Activated CD4-positive, alpha-beta T cell treated with anti-CD3 and anti-CD28 coated beads, Interleukin-2, amount 10 ng/mL, durations not matched to agents 7 days and 5 days (primary cell): ENCODE measurements at regions of chr1 and their contacts with region 1.

Region 1: DNA sequence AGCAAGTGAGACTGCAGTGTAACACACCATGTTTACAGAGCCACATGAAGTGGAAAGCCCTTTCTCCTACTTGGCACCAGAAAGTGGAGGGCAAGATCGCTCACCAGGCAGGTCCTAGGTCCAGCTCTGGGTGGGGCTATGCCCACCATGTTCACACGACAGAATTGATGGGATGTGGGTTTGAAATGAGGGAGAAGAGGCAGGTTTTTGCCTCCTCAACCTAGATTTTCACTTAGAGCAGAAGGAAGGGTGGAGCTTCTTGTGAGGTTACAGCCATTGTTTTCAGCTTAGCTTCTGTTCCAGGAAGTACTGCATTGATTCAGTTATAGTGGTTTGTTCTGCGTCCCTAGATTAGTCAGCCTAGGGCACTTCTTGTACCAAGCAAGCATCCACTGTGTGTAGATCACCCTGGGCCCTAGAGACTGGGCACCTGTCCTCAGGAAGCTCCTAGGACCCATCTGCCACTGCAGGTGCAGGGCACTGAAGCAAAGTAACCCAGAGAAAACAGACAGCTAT is 2.3 kb downstream of the CD53 start:
- DNase-seq: peak; percentile 71
- H3K4me3 Mint-ChIP-seq: peak overlapping the region; percentile 94
- H3K27ac Mint-ChIP-seq: peak overlapping the region; percentile 98
- H3K4me1 Mint-ChIP-seq: peaks cover 57% of the 10 kb centered on the region
- H3K27me3 Mint-ChIP-seq: no peaks in the 10 kb centered on the region

Region 2: DNA sequence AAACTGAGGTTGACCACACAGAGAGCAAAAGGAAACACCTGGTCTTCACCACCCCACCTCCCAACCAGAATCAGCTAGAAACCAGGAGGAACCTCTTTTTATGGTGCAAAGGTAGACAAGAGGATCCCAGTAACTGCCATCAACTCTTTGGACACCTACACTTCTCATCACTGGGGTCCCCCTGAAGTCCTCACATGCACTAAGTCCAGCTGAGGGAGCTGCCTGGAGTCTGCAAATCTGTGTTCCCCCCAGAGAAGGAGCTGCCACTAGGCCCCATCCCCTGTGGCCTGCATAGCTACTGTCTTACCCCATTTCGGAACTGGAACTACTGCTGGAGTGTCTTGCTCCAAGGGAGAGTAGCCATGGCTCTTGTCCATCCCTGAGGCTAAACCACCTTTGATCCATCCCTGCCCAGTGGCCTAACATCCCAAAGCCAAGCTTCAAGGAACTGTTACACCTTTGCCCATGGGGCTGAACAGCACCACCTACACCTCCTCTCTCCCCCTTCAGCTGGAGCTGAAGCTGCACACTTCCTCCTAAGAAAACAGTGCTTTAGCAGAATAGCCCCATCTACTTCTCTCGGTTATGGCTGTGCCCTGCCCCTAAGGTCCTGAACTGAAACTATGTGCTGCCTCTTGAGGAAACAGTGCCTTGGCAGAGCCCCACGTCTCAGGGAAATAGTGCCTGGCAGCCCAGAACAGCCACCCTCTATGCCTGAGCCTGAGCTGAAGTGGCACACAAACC is 87.8 kb before region 1 on chr1:
- CTCF ChIA-PET with region 1: no interaction called
- POLR2A ChIA-PET with region 1: interaction called, 16 read pairs
- DNase-seq: peak; percentile 83
- H3K4me3 Mint-ChIP-seq: peak overlapping the region; percentile 62
- H3K27ac Mint-ChIP-seq: peak overlapping the region; percentile 93
- H3K4me1 Mint-ChIP-seq: peaks cover 78% of the 10 kb centered on the region
- H3K27me3 Mint-ChIP-seq: no peaks in the 10 kb centered on the region